A549 (cell line): ENCODE measurements at regions of chr5 and their contacts with region 1.

Region 1: GRCh38 chr5:168987543-168988300 is 313.2 kb downstream of the SLIT3 start:
- DNase-seq: peak; percentile 51 to 66
- ATAC-seq: peak; percentile 62 to 81
- H3K4me3 ChIP-seq: no peak overlapping the region
- H3K27ac ChIP-seq: peak overlapping the region; percentile 39 to 61; a peak in 5 of 6 replicates
- H3K4me1 ChIP-seq: peaks cover 52% of the 10 kb centered on the region
- CTCF ChIP-seq: peak; percentile 99
- EP300 ChIP-seq: no peak
- POLR2A ChIP-seq: no peak
- RAD21 ChIP-seq: peak; percentile 95 to 97

Region 2: DNA sequence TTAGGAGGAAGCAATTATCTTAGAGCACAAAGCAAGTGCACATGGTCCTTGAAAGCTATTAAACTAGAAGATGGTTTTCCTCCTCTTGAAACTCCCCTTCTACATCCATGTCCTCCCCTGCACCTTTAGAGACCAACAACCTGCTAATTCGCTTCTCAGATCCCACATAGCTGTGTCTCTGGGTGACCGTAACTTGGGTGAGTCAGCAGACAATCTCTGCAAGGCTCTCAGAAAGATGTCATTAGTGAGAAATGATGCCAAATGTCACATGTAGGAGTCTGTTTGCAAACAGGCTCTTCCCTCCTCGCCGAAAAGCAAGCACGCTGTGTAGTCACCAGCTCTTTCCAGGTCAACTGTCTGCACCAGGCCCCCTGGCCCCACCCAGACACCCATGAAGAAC is 21.4 kb after region 1 on chr5:
- CTCF ChIA-PET with region 1: interaction called, 60 read pairs
- POLR2A ChIA-PET with region 1: no interaction called
- DNase-seq: peak; percentile 49 to 74
- ATAC-seq: peak; percentile 60 to 62
- H3K4me3 ChIP-seq: no peak overlapping the region
- H3K27ac ChIP-seq: peak overlapping the region; percentile 52 to 81
- H3K4me1 ChIP-seq: peaks cover 51% of the 10 kb centered on the region
- CTCF ChIP-seq: no peak
- EP300 ChIP-seq: peak; percentile 2 to 23; a peak in 1 of 5 replicates
- POLR2A ChIP-seq: no peak
- RAD21 ChIP-seq: 0 out of 5 replicates have a peak, but pooled peaks of 1 of the 2 experiments have one; percentile 10

Region 3: GRCh38 chr5:169074839-169075238 is 87.1 kb after region 1 on chr5:
- CTCF ChIA-PET with region 1: interaction called, 12 read pairs
- POLR2A ChIA-PET with region 1: no interaction called
- DNase-seq: no peak
- ATAC-seq: no peak
- H3K4me3 ChIP-seq: no peak overlapping the region
- H3K27ac ChIP-seq: no peak overlapping the region
- H3K4me1 ChIP-seq: peaks cover 13% of the 10 kb centered on the region
- CTCF ChIP-seq: no peak
- EP300 ChIP-seq: no peak
- POLR2A ChIP-seq: no peak
- RAD21 ChIP-seq: no peak

Region 4: GRCh38 chr5:169302491-169303118 is 314.9 kb after region 1 on chr5:
- CTCF ChIA-PET with region 1: interaction called, 53 read pairs
- POLR2A ChIA-PET with region 1: interaction called, 7 read pairs
- DNase-seq: peak; percentile 81 to 88
- ATAC-seq: peak in 1 of 2 experiments; percentile 54; a peak in 3 of 6 replicates
- H3K4me3 ChIP-seq: no peak overlapping the region
- H3K27ac ChIP-seq: peak overlapping the region; percentile 14 to 99; a peak in 4 of 6 replicates
- H3K4me1 ChIP-seq: peaks cover 38% of the 10 kb centered on the region
- CTCF ChIP-seq: peak; percentile 90
- EP300 ChIP-seq: no peak
- POLR2A ChIP-seq: no peak
- RAD21 ChIP-seq: peak; percentile 79 to 81

Region 5: DNA sequence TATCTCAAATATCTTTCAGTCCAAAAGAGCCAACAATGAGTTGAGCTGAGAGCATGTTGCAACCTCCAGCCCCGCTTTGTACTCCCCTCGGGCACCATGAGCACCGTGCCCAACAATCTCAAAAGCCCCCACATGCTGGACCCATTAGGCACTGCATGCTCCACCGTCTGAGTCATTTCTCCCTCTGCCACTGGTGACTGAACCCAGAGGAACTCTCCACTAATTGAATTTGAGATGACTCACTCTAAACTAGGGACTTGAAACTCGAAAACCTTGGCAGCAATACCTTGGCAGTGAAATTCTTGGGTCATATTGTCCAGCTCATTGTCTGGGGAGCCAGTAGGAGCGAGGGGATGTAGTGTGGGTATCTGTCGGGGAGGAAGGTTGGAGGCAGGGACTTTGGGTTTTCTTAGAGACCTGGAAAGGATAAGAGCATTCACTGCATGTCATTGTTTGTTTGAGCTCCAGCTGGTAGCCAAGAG is 363.1 kb after region 1 on chr5:
- CTCF ChIA-PET with region 1: interaction called, 13 read pairs
- POLR2A ChIA-PET with region 1: no interaction called
- DNase-seq: peak; percentile 93 to 96
- ATAC-seq: peak; percentile 94 to 96
- H3K4me3 ChIP-seq: no peak overlapping the region
- H3K27ac ChIP-seq: peak overlapping the region; percentile 89 to 91
- H3K4me1 ChIP-seq: peaks cover 66% of the 10 kb centered on the region
- CTCF ChIP-seq: no peak
- EP300 ChIP-seq: peak; percentile 94 to 97; a peak in 4 of 5 replicates
- POLR2A ChIP-seq: no peak
- RAD21 ChIP-seq: peak; percentile 33 to 57; a peak in 4 of 5 replicates

Region 6: GRCh38 chr5:169554251-169554650 is 566.5 kb after region 1 on chr5:
- CTCF ChIA-PET with region 1: interaction called, 96 read pairs
- POLR2A ChIA-PET with region 1: no interaction called
- DNase-seq: no peak
- ATAC-seq: no peak
- H3K4me3 ChIP-seq: no peak overlapping the region
- H3K27ac ChIP-seq: no peak overlapping the region
- H3K4me1 ChIP-seq: peaks cover 7% of the 10 kb centered on the region; the same call in 2 of the 3 replicates
- CTCF ChIP-seq: no peak
- EP300 ChIP-seq: no peak
- POLR2A ChIP-seq: no peak
- RAD21 ChIP-seq: no peak